Cardiac septum (tissue), 1 donor: ENCODE measurements at regions of chr9 and their contacts with region 1.

Region 1: DNA sequence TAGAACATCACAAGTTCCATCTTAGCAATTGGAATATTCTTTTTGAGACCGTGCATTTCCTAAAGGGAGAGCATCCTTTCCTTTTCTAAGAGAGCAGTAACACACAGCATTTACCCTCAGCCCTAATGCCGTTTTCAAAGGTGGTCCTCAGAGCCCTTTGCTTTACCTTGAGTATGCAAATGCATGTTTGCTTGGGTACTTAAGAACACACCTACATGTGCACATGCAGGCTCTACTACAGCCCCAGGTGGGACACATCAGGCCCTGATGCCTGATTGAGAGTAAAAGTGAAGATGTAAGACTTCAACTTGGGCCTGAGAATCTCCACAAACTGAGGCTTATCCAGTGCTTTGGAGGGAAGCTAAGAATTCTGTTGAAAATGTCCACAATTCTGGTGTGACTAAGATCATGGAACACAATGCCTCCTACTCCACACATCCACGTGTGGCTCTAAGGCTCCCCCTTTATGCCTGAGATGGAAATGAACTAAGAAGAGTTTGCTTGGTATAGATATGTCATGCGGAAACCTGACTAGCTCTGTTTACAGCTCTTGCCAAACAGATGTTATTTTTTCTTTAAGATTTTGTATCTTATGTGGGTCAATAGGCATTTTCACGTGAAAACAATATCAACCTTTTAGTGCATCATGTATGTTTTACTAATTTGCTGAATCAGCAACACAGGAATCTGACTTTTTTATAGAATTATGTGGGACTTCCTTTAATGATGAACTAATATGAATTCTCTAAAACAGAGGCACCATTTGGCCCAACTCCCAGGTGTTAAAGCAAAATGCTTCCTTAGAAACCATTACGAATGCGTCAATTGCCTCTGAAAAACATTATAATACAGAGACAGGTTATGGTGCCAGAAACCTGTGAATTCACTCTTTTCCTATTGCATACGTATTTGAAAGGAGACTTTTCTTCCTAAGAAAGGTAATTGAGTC is 48.9 kb upstream of the SLC2A8 start:
- DNase-seq: no peak

Region 2: DNA sequence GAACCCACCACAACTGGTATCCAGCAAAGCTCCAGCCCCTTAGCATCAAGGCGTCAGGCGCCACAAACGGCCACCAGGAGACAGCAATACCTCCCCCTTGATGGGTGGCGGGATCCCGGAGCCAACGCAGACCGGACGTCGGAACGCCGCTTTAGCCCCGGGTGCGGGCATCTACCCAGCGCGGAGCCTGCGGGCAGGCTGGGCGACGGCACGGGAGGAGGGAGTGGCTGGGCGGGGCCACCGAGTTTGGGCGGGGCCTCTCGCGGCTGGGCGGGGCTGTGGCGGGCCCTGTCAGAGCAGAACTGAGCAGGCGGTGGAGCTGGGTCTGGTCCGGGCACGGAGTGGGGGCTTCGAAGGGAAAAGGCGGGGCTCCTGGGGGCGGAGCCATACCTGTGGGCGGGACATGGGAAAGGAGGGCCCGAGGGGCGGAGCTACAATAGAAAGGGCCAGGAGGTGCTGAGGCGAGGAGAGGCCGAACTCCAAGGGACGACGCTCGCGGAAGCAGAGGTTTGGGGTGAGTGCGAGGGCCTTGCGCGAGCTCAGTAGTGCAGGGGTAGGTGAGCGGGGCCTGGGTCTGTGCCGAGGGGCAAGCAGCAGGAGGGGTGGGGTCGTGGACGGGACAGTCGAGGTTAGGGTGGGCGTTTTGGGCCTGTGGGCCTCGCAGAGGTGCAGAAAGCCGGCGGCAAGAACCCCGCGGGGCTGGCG is 123.8 kb before region 1 on chr9:
- intact Hi-C with region 1: loop called (anchors 5 kb)
- DNase-seq: peak; percentile 94

Region 3: DNA sequence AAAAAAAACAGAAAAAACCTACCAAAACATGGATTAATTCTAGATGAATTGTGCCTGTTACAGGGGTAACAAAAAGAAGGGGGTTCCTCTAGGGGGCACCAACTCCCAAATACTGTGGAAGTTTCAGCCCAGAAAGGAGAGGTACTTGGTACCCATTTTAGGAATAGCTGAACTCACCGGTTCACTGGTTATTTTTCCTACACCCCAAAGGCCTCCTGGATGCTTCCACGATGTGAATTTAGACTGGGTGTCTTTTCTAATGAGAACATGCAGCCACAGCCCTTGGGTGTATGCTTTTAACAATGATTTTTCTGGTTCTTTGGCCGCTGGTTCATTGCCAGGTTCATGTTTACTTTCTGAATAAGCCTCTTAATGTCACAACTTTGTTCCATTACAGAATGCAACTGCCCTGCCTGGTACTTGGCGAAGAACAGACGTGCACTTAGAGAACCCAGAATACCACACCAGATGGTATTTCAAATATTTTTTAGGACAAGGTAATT is 36.8 kb before region 1 on chr9:
- intact Hi-C with region 1: loop called (anchors 5 kb)
- DNase-seq: no peak

Region 4: GRCh38 chr9:127437497-127438264 is 89.6 kb after region 1 on chr9:
- intact Hi-C with region 1: no loop called
- DNase-seq: no peak

Region 5: DNA sequence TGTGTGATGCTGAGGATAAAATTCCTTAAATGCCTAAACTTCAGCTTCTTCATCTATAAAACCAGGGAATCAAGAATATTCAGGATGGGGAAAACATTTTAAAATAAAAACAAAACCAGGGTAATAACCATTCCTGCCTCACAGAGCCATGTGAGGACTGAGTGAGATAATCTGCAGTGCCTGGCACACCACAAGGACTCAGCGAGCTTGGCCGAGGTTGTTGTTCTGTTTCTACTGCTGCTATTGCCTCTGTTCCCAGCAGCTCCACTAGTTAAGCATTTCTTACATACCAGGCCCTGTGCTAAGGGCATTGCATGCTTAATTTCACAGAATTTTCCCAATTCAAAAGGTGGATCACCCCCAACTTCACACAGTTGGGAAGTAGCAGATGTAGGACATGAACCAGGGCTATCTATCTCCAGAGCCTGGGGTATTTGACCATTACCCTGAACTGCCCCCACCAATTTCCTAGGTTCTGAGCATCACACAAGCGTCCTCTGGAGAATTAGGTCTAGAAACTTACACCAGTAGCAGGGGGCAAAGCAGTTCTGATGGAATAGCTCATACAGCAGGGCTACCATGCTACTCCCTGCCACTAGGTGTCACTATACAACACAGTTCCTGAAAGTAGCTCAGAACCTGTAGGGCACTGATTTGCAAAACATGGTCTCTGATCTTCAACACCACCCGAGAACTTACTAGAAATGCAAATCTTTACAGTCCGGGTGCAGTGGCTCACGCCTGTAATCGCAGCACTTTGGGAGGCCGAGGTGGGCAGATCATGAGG is 177.5 kb after region 1 on chr9:
- intact Hi-C with region 1: no loop called
- DNase-seq: no peak